Dorsolateral prefrontal cortex (tissue), 120 donors: ENCODE measurements at regions of chrX and their contacts with region 1.

Region 1: DNA sequence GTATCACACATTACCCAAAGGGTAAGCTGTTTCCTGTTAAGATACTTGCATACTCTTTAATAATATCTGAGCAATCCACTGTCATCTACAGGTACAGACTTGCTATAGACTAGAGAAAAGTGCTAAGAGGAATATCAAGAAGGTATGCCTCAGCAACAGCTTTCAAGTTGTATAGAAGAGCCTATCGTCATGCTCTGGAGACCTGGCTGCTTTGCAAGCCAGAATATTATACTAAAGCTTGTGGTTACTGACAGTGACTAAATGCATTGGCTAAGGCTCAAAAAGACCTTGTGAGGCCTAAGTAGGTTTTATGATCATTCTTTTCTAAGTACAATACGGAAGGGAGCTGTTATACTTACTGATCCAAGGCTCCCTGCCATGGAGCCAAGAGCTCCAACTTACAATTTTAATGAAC is 11.3 kb downstream of the LAMP2 start:
- DNase-seq: no peak
- H3K4me3 ChIP-seq: peak overlapping the region in 2 of 59 donors; percentile 5 to 7
- H3K27ac ChIP-seq: peak overlapping the region in 7 of 59 donors; percentile 1 to 30 (median 19)
- H3K27me3 ChIP-seq: peaks cover 0 to 48% (median 0%) of the 10 kb centered on the region in 45 donors
- CTCF ChIP-seq: no peak

Region 2: DNA sequence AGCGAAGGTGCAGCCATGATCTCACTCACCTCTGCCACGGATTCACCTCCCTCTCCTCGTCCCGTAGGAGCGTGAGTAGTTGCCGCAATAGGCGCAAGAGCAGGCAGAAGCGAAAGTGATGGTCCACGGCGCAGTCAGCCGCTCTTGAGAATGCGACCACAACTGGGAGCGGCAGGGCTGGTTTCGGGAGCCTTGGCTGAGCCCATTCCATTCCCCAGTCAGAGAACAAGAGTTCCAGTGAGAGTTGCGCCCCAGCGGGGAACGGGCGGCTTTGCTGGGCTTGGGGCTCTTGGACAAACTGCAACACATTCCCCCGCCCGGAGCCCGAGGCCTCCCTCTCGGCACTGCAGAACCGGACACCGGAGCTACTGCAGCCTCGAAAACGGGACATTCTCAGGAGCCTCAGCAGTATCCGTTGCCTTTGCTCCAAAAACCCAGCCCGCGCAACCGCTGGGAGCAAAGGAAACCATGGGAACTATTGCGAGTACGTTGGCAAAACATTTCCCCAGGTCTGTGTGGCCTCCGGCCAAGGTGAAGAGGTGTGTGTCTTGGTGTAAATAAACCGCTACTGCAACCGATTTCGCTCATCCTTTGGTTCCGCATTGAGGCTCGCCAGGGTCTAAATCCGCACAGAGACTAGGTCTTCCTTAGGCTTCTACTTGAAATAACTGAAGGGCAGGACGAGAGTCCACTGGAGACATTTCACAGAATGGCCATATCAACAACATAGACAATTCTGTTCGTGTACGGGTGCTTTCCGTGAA is 212.9 kb before region 1 on chrX:
- intact Hi-C with region 1: loop called in 1 of 2 experiments (anchors 10 kb)
- DNase-seq: peak in 9 of 10 donors; percentile 33 to 74 (median 49)
- H3K4me3 ChIP-seq: peak overlapping the region; percentile 31 to 79 (median 66)
- H3K27ac ChIP-seq: peak overlapping the region in 53 of 59 donors; percentile 11 to 87 (median 72)
- H3K27me3 ChIP-seq: peaks cover 0 to 65% (median 8%) of the 10 kb centered on the region in 45 donors
- CTCF ChIP-seq: peak in 12 of 56 donors; percentile 8 to 29 (median 14)

Region 3: DNA sequence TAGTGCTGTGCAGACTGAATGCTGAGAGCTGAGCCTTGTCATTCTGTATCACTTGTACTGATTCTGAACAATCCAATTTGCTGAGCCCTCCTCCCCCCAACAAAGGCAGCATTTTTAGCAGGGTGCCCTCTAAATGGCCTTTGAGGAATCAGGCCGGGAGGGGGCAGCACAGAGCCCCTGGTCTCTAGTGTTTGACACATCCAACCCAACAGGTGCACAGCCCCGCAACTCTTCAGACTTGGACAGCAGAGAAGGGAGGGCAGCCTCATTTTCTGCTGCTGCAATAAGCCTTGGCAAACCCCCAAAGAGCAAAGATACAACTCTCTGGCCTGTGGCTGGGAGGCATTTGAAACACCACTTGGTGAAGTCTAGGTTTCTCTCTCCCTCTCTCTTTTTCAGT is 92.5 kb before region 1 on chrX:
- intact Hi-C with region 1: loop called (anchors 10 kb)
- DNase-seq: peak in 8 of 10 donors; percentile 16 to 63 (median 50)
- H3K4me3 ChIP-seq: no peak overlapping the region
- H3K27ac ChIP-seq: no peak overlapping the region
- H3K27me3 ChIP-seq: peaks cover 0 to 83% (median 28%) of the 10 kb centered on the region in 45 donors
- CTCF ChIP-seq: peak in 50 of 56 donors; percentile 22 to 67 (median 47)

Region 4: GRCh38 chrX:120380699-120381098 is 77.1 kb before region 1 on chrX:
- intact Hi-C with region 1: no loop called
- DNase-seq: no peak
- H3K4me3 ChIP-seq: no peak overlapping the region
- H3K27ac ChIP-seq: no peak overlapping the region
- H3K27me3 ChIP-seq: peaks cover 0 to 55% (median 25%) of the 10 kb centered on the region in 45 donors
- CTCF ChIP-seq: peak in 4 of 56 donors; percentile 19 to 29 (median 21)